A549 (cell line): ENCODE measurements at regions of chr10 and their contacts with region 1.

Region 1: DNA sequence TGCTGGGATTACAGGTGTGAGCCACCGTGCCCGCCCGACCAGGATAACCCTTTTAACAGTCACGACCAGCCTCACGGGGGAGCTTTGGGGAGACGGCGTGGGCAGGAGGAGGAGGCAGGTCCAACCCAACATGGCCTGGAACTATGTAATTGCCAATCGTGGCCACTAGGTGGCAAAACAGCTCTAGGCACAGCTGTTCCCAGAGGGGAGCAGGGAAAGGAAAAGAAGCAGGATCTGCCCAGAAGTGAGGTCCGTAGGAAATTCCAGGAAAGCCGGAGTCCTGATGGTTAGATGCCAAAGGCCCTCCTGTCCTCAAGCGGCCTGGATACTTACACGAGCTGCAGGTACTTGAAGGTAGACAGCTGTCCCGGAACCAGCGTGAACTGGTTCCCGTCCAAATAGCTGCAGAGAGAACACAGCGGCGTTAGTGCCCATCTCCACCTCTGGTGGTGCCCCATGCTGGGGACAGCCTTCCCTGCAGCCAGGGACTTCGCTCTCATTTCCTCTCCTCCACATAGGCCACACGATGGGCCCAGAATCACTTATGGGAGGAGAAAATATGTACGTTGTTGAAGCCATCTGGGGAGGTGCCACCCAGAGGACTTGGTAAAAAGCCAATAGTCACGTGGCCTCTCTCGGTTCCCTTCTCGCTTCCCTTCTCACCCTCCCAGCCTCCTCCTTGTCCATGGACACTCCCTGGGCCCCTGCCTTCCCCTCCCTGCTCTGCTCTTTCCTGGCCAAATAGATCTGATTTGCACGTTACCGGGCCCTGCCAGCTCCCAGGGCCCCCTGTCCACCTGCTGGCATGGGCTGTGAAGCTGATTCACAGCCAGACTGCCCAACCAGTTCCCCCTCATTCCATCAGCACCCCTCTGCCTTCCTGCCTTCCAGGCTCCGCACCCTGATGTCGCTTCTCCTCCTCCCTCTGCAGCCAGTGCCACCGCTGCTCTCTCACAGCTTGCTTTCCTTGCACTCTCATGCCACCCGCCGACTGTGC is 148.1 kb downstream of the SLIT1 start:
- DNase-seq: peak; percentile 85 to 87
- ATAC-seq: peak; percentile 90 to 98
- H3K4me3 ChIP-seq: peak overlapping the region; percentile 33
- H3K27ac ChIP-seq: peak overlapping the region; percentile 58 to 64
- H3K4me1 ChIP-seq: no peaks in the 10 kb centered on the region
- CTCF ChIP-seq: peak; percentile 86
- EP300 ChIP-seq: no peak
- POLR2A ChIP-seq: no peak
- RAD21 ChIP-seq: peak; percentile 81 to 84

Region 2: GRCh38 chr10:96565774-96566173 is 471.9 kb before region 1 on chr10:
- CTCF ChIA-PET with region 1: no interaction called
- POLR2A ChIA-PET with region 1: no interaction called
- DNase-seq: no peak
- ATAC-seq: no peak
- H3K4me3 ChIP-seq: no peak overlapping the region
- H3K27ac ChIP-seq: no peak overlapping the region
- H3K4me1 ChIP-seq: peaks cover 21% of the 10 kb centered on the region
- CTCF ChIP-seq: no peak
- EP300 ChIP-seq: no peak
- POLR2A ChIP-seq: no peak
- RAD21 ChIP-seq: no peak

Region 3: GRCh38 chr10:97010695-97011206 is 26.9 kb before region 1 on chr10:
- CTCF ChIA-PET with region 1: interaction called, 21 read pairs
- POLR2A ChIA-PET with region 1: no interaction called
- DNase-seq: no peak
- ATAC-seq: peak; percentile 35 to 47; a peak in 4 of 6 replicates
- H3K4me3 ChIP-seq: no peak overlapping the region
- H3K27ac ChIP-seq: no peak overlapping the region
- H3K4me1 ChIP-seq: no peaks in the 10 kb centered on the region
- CTCF ChIP-seq: no peak
- EP300 ChIP-seq: no peak
- POLR2A ChIP-seq: no peak
- RAD21 ChIP-seq: no peak

Region 4: DNA sequence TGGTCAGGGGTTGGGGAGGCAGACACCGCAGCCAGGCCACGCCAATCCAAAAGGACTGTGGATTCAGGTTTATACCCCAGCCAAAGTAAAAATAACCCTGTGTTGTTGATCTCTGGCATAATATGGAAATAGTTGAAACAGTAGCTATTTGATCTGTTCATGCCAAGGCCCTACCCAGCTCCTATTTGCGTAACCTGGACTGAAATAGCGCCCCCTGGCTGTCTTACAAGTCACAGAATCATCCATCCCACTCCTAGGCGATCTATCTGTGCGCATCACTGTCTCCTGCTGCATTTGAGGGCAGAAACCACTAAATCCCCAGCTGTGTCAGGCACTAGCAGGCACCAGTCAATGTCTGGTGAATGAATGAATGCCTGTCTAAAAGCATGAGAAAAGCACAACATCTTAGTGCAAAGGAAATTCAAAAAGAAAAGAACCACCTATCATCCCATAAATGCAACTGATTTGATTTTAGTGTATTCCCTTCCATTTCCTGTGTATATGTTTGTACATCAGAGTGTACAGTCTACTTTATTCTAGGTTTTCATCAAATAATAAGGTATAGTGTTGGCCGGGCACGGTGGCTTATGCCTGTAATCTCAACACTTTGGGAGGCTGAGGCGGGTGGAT is 11.9 kb before region 1 on chr10:
- CTCF ChIA-PET with region 1: interaction called, 70 read pairs
- POLR2A ChIA-PET with region 1: no interaction called
- DNase-seq: peak; percentile 44 to 75
- ATAC-seq: peak in 1 of 2 experiments; percentile 74; a peak in 3 of 6 replicates
- H3K4me3 ChIP-seq: no peak overlapping the region
- H3K27ac ChIP-seq: peak overlapping the region in 1 of 2 experiments; percentile 82; a peak in 2 of 6 replicates
- H3K4me1 ChIP-seq: peaks cover 28% of the 10 kb centered on the region
- CTCF ChIP-seq: peak; percentile 62
- EP300 ChIP-seq: no peak
- POLR2A ChIP-seq: no peak
- RAD21 ChIP-seq: peak; percentile 19 to 42; a peak in 3 of 5 replicates

Region 5: GRCh38 chr10:97059006-97059871 is 21.6 kb after region 1 on chr10:
- CTCF ChIA-PET with region 1: interaction called, 11 read pairs
- POLR2A ChIA-PET with region 1: no interaction called
- DNase-seq: no peak
- ATAC-seq: peak in 1 of 2 experiments; percentile 57; a peak in 4 of 6 replicates
- H3K4me3 ChIP-seq: no peak overlapping the region
- H3K27ac ChIP-seq: no peak overlapping the region
- H3K4me1 ChIP-seq: peaks cover 5% of the 10 kb centered on the region; the same call in 2 of the 3 replicates
- CTCF ChIP-seq: no peak
- EP300 ChIP-seq: no peak
- POLR2A ChIP-seq: no peak
- RAD21 ChIP-seq: no peak

Region 6: DNA sequence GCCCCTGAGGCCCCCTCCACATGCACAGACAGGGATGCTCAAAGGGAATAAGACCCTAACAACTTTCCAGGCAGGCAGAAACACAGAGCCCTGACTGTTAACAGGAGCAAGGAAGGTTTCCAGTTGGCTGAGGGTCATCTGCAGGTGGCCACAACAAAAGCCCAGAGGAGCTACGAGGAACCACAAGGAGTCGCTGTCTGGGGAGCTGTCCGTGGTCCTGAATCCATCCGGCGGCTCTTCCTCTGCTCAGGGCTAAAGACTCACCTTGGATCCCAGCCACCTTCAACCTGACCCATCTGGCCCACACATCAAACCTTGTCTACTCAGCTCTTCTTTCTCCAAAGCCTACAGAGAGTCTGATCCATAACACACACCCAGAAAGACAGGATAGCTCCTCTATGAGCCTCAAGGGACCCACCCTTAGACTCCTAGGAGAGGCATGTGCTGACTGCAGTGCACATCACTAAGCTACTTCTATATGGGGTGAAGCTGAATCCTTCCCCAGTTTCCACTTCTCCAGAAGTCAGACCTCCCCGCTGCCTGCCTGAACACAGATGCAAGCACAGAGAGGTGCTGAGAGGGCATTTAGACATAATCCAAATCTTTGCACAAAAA is 44.1 kb after region 1 on chr10:
- CTCF ChIA-PET with region 1: interaction called, 10 read pairs
- POLR2A ChIA-PET with region 1: no interaction called
- DNase-seq: peak; percentile 66 to 71
- ATAC-seq: peak; percentile 72 to 90; a peak in 5 of 6 replicates
- H3K4me3 ChIP-seq: no peak overlapping the region
- H3K27ac ChIP-seq: no peak overlapping the region
- H3K4me1 ChIP-seq: no peaks in the 10 kb centered on the region
- CTCF ChIP-seq: peak; percentile 68
- EP300 ChIP-seq: no peak
- POLR2A ChIP-seq: no peak
- RAD21 ChIP-seq: peak; percentile 30 to 49; a peak in 4 of 5 replicates

Region 7: GRCh38 chr10:97210543-97210961 is 172.9 kb after region 1 on chr10:
- CTCF ChIA-PET with region 1: interaction called, 99 read pairs
- POLR2A ChIA-PET with region 1: no interaction called
- DNase-seq: peak; percentile 60 to 73
- ATAC-seq: peak; percentile 69 to 89; a peak in 4 of 6 replicates
- H3K4me3 ChIP-seq: no peak overlapping the region
- H3K27ac ChIP-seq: no peak overlapping the region
- H3K4me1 ChIP-seq: no peaks in the 10 kb centered on the region
- CTCF ChIP-seq: peak; percentile 98
- EP300 ChIP-seq: no peak
- POLR2A ChIP-seq: no peak
- RAD21 ChIP-seq: peak; percentile 81 to 85